Dendritic cell treated with granulocyte-macrophage colony-stimulating factor and Interleukin-4, amounts not matched to agents 40 ng/mL and 50 ng/mL, for 4 days (primary cell): ENCODE measurements at regions of chrX and their contacts with region 1.

Region 1: DNA sequence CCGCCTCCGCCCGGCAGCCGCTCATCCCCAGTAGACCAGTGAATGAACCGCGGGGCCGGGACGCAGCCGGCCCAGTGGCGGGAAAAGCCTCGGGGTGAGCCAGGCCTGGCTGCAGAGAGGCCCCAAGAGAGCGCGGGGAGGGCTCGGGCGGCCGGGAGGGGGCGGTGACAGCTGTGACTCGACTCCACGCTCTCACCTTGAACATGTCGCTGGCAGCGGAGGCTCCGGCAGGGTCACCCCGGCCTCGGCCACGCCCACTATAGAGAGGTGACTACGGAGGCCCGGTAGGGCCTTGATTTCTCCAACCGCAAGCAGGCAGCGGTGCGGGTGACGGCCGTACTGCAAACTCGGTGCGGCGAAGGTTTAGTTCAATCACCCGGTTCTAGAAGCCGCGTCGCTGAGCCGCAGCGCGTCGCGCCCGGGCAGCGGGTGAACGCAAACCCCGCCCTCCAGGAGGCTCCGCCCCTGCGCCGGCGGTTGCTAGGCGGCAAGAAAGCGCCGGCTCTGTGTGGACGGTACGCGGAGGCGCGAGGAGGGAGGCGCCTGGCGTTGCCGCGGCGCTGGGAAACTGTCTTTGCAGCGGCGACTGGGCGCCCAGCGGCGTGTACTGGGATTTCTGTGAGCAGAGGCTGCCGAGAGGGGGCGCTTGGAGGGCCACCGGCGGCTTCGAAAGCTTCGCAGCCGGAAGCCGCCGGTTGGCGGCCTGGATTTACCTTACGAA is at the starts of genes APOO and CXorf58:
- H3K4me3 Mint-ChIP-seq: peak within 1 kb of the TSS; percentile 73
- H3K27ac Mint-ChIP-seq: peak within 1 kb of the TSS; percentile 80
- H3K4me1 Mint-ChIP-seq: peaks cover 21% of the 10 kb centered on the region
- H3K27me3 Mint-ChIP-seq: no peaks in the 10 kb centered on the region

Region 2: DNA sequence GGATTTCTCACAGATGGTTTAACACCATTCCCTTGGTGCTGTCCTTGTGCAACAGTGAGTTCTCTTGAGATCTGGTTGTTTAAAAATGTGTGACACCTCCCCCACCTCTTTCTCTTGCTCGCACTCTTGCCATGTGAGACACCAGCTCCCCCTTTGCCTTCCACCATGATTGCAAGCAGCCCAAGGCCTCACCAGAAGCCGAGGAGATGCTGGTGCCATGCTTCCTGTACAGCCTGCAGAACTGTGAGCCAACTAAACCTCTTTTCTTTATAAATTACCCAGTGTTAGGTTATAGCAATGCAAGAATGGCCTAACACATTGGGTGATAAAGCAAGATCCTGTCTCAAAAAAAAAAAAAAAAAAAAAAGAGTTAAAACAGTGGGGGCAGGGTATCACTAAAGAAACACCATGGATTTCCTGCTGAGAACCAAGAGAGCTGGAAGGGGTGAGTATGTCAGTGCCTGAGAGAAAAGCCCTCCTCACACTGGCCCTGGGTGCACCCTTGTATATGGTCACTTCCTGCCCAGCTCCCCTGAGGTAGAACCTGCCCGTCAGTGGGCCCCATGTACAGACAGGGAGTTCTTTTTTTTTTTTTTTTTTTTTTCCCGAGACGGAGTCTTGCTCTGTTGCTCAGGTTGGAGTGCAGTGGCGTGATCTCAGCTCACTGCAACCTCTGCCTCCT is 46.3 kb before region 1 on chrX:
- intact Hi-C with region 1: no loop called
- H3K4me3 Mint-ChIP-seq: no peak overlapping the region
- H3K27ac Mint-ChIP-seq: no peak overlapping the region
- H3K4me1 Mint-ChIP-seq: peaks cover 10% of the 10 kb centered on the region
- H3K27me3 Mint-ChIP-seq: no peaks in the 10 kb centered on the region

Region 3: DNA sequence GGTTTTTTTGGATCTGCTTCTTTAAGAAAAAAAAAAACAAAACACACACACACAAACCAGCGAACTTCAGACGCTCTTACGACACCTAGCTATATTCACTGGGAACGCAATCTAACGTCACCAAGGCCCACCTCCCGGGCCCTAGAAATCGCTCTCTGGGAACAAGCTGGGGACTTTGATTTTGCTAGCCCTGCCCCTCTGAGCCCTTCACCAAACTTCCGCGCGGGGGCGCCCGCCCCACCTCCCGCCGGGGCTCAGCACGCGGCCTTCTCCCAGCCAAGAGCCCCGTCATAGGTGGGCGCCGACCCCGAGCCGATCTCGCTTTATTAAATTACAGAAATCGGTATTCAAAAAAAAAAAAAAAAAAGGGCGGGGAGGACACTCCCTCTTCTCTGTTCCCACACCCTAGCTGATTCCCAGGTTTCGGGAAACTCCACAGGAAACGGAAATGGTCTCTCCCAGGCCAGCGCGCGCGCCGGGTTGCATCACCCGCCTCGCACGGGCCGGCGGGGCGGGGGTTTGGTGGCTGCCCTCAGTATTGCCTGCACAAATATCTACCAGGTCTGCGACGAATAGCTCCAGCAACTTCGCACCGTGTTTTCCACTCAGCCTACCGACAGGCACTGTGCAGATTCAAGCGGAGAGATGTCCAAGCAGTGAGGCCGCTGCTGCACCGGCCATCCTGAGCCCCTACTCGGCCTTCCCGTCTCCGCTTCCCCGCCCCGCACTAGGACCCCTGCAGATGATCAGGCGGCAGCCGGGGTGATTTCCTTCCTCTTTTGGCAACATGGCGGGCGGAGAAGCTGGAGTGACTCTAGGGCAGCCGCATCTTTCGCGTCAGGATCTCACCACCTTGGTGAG is 146.8 kb after region 1 on chrX and contains the start of gene EIF2S3:
- intact Hi-C with region 1: loop called (anchors 1 kb)
- H3K4me3 Mint-ChIP-seq: peak within 1 kb of the TSS; percentile 87
- H3K27ac Mint-ChIP-seq: peak within 1 kb of the TSS; percentile 99
- H3K4me1 Mint-ChIP-seq: no peaks in the 10 kb centered on the region
- H3K27me3 Mint-ChIP-seq: no peaks in the 10 kb centered on the region

Region 4: GRCh38 chrX:24150051-24150790 is 242.6 kb after region 1 on chrX:
- intact Hi-C with region 1: loop called (anchors 5 kb)
- H3K4me3 Mint-ChIP-seq: peak overlapping the region; percentile 80
- H3K27ac Mint-ChIP-seq: peak overlapping the region; percentile 82
- H3K4me1 Mint-ChIP-seq: peaks cover 26% of the 10 kb centered on the region
- H3K27me3 Mint-ChIP-seq: no peaks in the 10 kb centered on the region